Cardiac septum (tissue), 1 donor: ENCODE measurements at regions of chr20 and their contacts with region 1.

Region 1: DNA sequence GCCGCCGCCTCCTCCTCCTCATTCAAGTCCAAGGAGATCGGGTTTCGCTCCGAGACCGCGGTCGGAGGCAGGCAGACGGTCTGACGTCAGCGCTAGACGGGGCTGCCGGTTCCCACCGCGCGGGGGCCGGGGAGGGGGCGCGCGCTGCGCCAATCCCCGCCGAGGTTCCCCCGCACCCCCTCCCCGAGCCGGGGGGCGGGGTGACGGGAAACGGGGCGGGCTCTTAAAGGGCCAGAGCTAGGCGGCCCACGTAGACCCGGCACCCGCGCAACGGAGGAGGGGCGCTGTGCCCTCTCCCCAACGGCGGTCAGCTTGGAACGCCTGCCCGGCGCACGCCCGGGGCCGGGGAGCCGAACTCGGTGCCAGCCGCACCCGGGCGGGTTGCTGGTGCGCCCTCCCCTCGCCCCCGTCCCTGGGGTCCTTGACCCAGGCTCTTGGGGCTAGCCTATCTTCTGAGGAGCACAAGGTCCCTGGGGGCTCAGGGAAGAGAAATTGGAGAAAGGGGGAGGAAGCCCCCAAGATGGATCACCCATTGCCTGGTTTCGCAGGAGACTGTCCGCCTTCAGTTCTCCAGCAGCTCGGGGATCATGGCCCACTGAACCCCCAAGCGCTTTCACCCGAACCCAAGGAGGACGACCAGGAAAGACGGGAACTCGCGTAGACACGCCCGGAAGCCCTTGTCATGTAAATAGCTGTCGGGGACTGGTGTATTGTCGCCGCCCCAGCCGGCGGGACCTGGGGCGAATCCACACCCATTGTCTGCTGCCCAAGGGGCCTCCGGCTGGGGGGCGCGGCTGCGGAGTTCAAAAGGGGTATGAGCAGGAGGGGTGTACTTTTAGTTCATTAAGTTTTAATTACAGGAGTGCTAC is at the start of gene PMEPA1:
- DNase-seq: peak; percentile 95
- total RNA-seq, gene PMEPA1: 34.8 TPM

Region 2: DNA sequence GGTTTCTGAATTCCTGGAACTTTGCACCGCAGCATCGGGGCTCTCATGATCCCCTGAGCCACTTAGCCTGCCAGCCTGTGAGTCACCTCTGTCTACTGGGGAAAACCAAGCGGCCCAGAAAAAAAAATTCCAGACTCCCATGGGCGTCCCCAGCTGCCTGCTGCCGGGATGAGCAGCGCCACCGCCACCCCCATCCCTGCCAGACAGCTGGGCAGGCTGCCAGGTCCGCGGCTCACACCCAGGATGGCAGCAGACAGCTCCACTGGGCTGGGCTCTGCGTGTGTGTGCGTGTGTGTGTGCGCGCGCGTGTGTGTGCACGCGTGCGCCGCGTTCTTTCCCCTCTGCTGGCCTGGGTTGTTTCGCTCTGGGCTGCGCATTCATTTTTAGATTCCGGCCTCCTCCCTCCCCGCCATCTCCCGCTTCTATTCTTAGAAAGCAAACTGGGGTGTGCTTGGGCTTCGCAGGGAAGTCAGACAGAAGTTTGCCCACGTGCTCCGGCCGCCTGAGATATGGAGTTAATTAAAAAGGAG is 38.5 kb after region 1 on chr20:
- intact Hi-C with region 1: loop called (anchors 2 kb)
- DNase-seq: peak; percentile 89

Region 3: GRCh38 chr20:57809596-57810172 is 99.5 kb after region 1 on chr20:
- intact Hi-C with region 1: loop called (anchors 5 kb)
- DNase-seq: no peak